ENCODE measurements at regions of chr9 and their contacts with region 1.

Region 1: DNA sequence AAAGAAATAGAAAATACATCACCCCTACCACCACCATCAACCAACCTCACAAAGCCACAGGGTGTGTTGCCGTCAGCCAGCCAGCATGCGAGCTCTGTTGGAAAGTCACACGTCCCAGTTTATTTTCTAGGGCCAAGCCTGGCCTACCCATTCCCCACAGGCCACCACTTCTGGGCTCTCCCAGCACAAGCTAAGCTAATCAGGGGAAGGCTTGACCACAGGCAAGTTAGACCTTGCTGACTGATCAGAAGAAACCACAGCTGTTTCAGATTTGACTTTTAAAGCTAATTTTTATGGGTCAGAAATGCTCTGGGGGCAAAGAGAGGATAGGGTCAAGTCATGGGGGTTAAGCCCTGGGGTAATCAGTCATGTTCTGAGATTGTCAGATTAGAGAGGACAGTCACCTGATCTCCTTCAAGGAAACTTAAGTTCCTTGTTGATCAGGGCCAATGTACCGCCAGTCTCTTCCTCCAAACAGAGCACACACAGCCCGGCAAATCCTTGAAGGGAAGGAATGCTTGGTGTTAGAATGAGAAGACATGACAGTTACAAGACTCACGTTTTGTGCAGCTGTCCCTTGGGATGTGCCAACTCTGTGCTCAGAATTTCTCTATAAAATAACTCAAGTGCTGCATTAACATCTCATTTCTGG is 7.6 kb downstream of the SHB start:
- DNase-seq: peak in 1 of 10 donors; percentile 42

Region 2: GRCh38 chr9:38026021-38026809 is 35.2 kb before region 1 on chr9:
- intact Hi-C with region 1: loop called (anchors 2 kb)
- DNase-seq: peak in 1 of 10 donors; percentile 26

Region 3: DNA sequence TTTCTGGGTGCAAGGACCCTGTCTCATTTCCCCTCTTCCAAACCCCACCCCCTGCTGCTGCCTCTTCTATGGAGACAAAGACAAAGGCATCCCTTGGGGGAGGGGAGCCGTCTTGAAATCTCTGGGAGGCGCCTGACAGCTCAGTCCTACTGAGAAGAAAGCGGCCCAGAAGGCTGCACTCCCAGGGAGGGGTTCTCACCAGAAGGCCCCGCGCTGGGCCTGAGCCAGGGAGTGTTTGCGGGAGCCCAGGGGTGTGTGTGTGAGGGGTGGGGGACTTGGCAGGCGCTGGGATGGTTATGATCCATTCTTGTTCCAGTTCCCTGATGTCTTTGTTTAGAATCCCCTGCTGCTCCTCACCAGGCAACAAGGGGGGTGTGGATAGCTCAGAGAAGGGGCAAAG is 285.4 kb after region 1 on chr9:
- intact Hi-C with region 1: no loop called
- DNase-seq: peak in 1 of 10 donors; percentile 32